B cell (primary cell): ENCODE measurements at regions of chr1 and their contacts with region 1.

Region 1: GRCh38 chr1:226679853-226680516 is 59.1 kb downstream of the ITPKB start:
- DNase-seq: peak; percentile 90
- ATAC-seq: peak; percentile 48
- H3K4me3 ChIP-seq: peak overlapping the region; percentile 19 to 63 (median 55)
- H3K4me3 Mint-ChIP-seq: peak overlapping the region; percentile 83
- H3K27ac ChIP-seq: peak overlapping the region; percentile 88 to 94
- H3K27ac Mint-ChIP-seq: peak overlapping the region; percentile 96
- H3K4me1 ChIP-seq: peaks cover 94 to 99% of the 10 kb centered on the region in 2 donors
- H3K4me1 Mint-ChIP-seq: peaks cover 98% of the 10 kb centered on the region
- H3K27me3 ChIP-seq: no peaks in the 10 kb centered on the region
- H3K27me3 Mint-ChIP-seq: no peaks in the 10 kb centered on the region
- CTCF ChIP-seq: no peak

Region 2: DNA sequence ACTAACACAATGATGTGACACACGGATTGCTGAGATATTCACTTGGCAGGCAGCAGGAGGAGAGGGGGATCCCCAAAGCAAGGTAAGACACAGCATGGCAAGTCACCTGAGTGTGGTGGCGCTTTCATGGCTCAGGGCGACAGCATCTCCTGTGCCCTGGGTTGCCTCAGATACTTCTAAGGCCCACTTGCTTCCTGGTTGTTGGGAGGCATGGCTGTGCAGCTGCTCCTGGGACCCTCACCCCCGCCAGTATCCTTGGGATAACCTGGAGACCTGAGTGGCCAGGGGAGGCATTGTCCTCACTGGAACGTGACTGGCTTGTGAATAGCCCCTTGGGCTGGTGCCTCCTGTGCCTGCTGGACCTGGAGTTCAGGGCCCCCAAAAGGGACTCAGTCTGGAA is 61.6 kb before region 1 on chr1:
- CTCF ChIA-PET with region 1: no interaction called
- POLR2A ChIA-PET with region 1: no interaction called
- intact Hi-C with region 1: no loop called
- DNase-seq: no peak
- ATAC-seq: no peak
- H3K4me3 ChIP-seq: no peak overlapping the region
- H3K4me3 Mint-ChIP-seq: no peak overlapping the region
- H3K27ac ChIP-seq: no peak overlapping the region
- H3K27ac Mint-ChIP-seq: no peak overlapping the region
- H3K4me1 ChIP-seq: no peaks in the 10 kb centered on the region
- H3K4me1 Mint-ChIP-seq: no peaks in the 10 kb centered on the region
- H3K27me3 ChIP-seq: no peaks in the 10 kb centered on the region
- H3K27me3 Mint-ChIP-seq: no peaks in the 10 kb centered on the region
- CTCF ChIP-seq: no peak

Region 3: DNA sequence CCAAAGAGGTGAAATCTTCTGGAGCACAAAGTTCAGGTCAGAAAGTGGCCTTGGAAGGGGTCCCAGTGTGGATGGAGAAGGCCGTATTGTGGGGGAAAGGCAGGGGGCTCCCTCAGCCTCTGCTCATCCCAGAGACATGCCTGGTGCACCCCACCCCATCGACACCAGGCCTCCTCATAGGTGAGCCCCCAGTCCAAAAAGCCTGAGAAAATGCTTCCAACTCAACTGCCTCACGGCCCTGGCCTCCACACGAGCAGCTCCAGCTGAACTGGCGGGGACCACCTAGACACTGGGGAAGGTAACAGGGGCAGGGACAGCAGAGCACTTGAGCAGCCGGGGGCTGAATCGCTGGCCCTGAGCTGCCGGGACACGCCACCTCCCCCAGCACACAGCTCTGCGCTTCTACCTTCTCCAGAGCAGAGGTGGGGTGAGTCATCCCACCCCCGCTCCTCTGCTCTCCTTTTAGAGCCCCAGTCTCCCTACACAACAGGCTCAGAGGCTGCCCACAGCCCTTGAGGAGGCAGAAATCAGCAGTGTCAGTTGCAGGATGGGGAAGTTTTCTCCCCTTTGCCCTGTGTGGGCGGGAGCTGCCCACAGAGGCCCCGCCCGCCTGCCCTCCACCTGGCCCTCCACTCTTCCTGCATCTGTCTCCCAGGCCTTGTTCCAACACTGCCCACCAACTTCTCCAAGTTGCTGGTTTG is 37.0 kb before region 1 on chr1:
- CTCF ChIA-PET with region 1: interaction called, 78 read pairs
- POLR2A ChIA-PET with region 1: interaction called, 4 read pairs
- intact Hi-C with region 1: loop called (anchors 2 kb)
- DNase-seq: peak; percentile 62
- ATAC-seq: peak; percentile 48
- H3K4me3 ChIP-seq: no peak overlapping the region
- H3K4me3 Mint-ChIP-seq: peak overlapping the region; percentile 81
- H3K27ac ChIP-seq: peak overlapping the region; percentile 62 to 68
- H3K27ac Mint-ChIP-seq: peak overlapping the region; percentile 91
- H3K4me1 ChIP-seq: peaks cover 57 to 70% of the 10 kb centered on the region in 2 donors
- H3K4me1 Mint-ChIP-seq: peaks cover 71% of the 10 kb centered on the region
- H3K27me3 ChIP-seq: no peaks in the 10 kb centered on the region
- H3K27me3 Mint-ChIP-seq: no peaks in the 10 kb centered on the region
- CTCF ChIP-seq: no peak

Region 4: GRCh38 chr1:226697151-226697939 is 17.4 kb after region 1 on chr1:
- CTCF ChIA-PET with region 1: interaction called, 9 read pairs
- POLR2A ChIA-PET with region 1: interaction called, 7 read pairs
- intact Hi-C with region 1: loop called (anchors 1 kb)
- DNase-seq: peak; percentile 88
- ATAC-seq: peak; percentile 83
- H3K4me3 ChIP-seq: peak overlapping the region in 1 of 5 experiments; percentile 4
- H3K4me3 Mint-ChIP-seq: peak overlapping the region; percentile 75
- H3K27ac ChIP-seq: peak overlapping the region; percentile 93 to 94
- H3K27ac Mint-ChIP-seq: peak overlapping the region; percentile 95
- H3K4me1 ChIP-seq: peaks cover 86 to 93% of the 10 kb centered on the region in 2 donors
- H3K4me1 Mint-ChIP-seq: peaks cover 89% of the 10 kb centered on the region
- H3K27me3 ChIP-seq: no peaks in the 10 kb centered on the region
- H3K27me3 Mint-ChIP-seq: no peaks in the 10 kb centered on the region
- CTCF ChIP-seq: no peak

Region 5: DNA sequence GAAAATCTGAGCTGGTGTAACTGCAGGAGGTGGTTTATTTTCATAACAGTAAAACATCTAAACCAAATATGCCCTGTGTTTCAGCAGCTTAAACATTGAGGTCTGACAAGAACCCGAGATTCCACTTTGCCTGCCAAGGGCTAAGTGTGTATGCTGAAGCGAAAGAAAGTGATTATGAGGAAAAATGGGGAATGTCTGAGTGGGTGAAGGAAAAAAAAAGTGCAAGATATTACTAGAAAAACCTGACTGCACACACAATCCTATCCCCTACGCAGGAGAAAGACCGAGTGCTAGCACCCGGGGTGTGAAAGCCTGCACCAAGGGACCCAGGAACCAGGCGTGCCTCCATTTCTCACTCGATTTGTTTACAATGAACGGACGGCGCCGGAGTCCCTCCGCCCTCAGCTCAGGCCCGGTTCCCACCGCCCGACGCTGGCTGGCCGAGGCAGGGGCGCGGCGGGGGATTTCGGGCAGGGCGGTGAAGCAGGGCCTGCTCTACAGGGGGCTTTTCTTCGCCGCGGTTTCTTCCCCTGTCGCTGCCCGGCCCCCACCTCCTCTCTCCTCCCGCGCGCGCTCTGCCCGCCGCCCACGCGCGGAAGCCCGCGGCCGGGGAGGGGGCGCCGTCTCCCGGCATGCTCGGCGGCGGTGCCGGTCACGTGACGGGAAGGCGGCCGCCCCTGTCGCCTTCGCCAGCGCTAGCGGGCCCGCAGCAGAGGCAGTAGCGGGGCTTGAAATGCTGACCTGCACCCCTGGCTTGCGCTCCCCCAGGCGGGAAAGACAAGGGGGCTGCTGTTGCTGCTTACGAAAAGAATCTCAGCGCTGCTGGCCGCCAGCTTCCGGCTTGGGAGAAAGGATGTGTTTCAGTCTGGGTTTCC is 23.2 kb after region 1 on chr1:
- CTCF ChIA-PET with region 1: interaction called, 5 read pairs
- POLR2A ChIA-PET with region 1: interaction called, 7 read pairs
- intact Hi-C with region 1: loop called (anchors 1 kb)
- DNase-seq: peak; percentile 94
- ATAC-seq: peak; percentile 85
- H3K4me3 ChIP-seq: peak overlapping the region; percentile 63 to 80 (median 75)
- H3K4me3 Mint-ChIP-seq: peak overlapping the region; percentile 90
- H3K27ac ChIP-seq: peak overlapping the region; percentile 96 to 99
- H3K27ac Mint-ChIP-seq: peak overlapping the region; percentile 93
- H3K4me1 ChIP-seq: peaks cover 46 to 49% of the 10 kb centered on the region in 2 donors
- H3K4me1 Mint-ChIP-seq: peaks cover 55% of the 10 kb centered on the region
- H3K27me3 ChIP-seq: no peaks in the 10 kb centered on the region
- H3K27me3 Mint-ChIP-seq: no peaks in the 10 kb centered on the region
- CTCF ChIP-seq: no peak